Activated naive CD4-positive, alpha-beta T cell treated with anti-CD3 and anti-CD28 coated beads for 36 hours (primary cell): ENCODE measurements at regions of chr16 and their contacts with region 1.

Region 1: GRCh38 chr16:54929090-54930004 is 1.3 kb upstream of the IRX5 start:
- DNase-seq: peak; percentile 98
- H3K4me3 Mint-ChIP-seq: peak overlapping the region; percentile 75
- H3K27ac Mint-ChIP-seq: no peak overlapping the region
- H3K4me1 Mint-ChIP-seq: peaks cover 27% of the 10 kb centered on the region
- H3K27me3 Mint-ChIP-seq: peaks cover 65% of the 10 kb centered on the region

Region 2: GRCh38 chr16:53537626-53538025 is 1391.7 kb before region 1 on chr16:
- CTCF ChIA-PET with region 1: no interaction called
- intact Hi-C with region 1: loop called (anchors 5 kb)
- DNase-seq: no peak
- H3K4me3 Mint-ChIP-seq: no peak overlapping the region
- H3K27ac Mint-ChIP-seq: no peak overlapping the region
- H3K4me1 Mint-ChIP-seq: peaks cover 19% of the 10 kb centered on the region
- H3K27me3 Mint-ChIP-seq: peaks cover 7% of the 10 kb centered on the region

Region 3: GRCh38 chr16:53703590-53704444 is 1225.5 kb before region 1 on chr16 and contains the starts of genes FTO and RPGRIP1L:
- CTCF ChIA-PET with region 1: no interaction called
- intact Hi-C with region 1: loop called (anchors 1 kb)
- DNase-seq: peak; percentile 99
- H3K4me3 Mint-ChIP-seq: peak within 1 kb of the TSS; percentile 100
- H3K27ac Mint-ChIP-seq: peak within 1 kb of the TSS; percentile 89
- H3K4me1 Mint-ChIP-seq: peaks cover 30% of the 10 kb centered on the region
- H3K27me3 Mint-ChIP-seq: no peaks in the 10 kb centered on the region
- total RNA-seq, gene FTO: 60.2 to 63.9 TPM
- total RNA-seq, gene RPGRIP1L: 4.3 to 5.2 TPM

Region 4: GRCh38 chr16:53945996-53946395 is 983.4 kb before region 1 on chr16:
- CTCF ChIA-PET with region 1: no interaction called
- intact Hi-C with region 1: loop called (anchors 10 kb)
- DNase-seq: no peak
- H3K4me3 Mint-ChIP-seq: no peak overlapping the region
- H3K27ac Mint-ChIP-seq: no peak overlapping the region
- H3K4me1 Mint-ChIP-seq: peaks cover 6% of the 10 kb centered on the region
- H3K27me3 Mint-ChIP-seq: no peaks in the 10 kb centered on the region

Region 5: GRCh38 chr16:54286090-54286993 is 643.0 kb before region 1 on chr16 and contains the start of gene IRX3:
- CTCF ChIA-PET with region 1: no interaction called
- intact Hi-C with region 1: loop called (anchors 1 kb)
- DNase-seq: peak; percentile 19
- H3K4me3 Mint-ChIP-seq: peak within 1 kb of the TSS; percentile 48
- H3K27ac Mint-ChIP-seq: no peak within 1 kb of the TSS
- H3K4me1 Mint-ChIP-seq: peaks cover 41% of the 10 kb centered on the region
- H3K27me3 Mint-ChIP-seq: peaks cover 69% of the 10 kb centered on the region
- total RNA-seq, gene IRX3: not detected

Region 6: DNA sequence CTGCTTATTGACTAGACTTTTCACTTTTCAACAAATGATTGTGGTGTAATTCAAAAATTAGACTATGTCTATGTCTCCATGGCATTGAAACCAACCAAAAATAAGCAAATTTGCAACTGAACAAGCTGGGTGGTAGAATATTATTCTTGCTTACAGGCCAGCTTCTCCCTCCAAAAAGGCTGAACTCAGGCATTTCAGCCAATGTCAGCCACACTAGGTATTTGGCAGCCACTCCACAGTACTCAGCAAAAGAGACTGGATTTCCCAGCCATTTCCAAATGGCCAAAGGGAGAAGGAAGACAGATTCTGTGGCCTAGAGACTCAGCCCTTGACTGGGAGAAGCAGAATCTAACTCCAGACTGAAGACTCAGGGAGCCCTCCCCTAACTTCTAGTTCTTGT is 120.5 kb before region 1 on chr16:
- CTCF ChIA-PET with region 1: no interaction called
- intact Hi-C with region 1: no loop called
- DNase-seq: no peak
- H3K4me3 Mint-ChIP-seq: no peak overlapping the region
- H3K27ac Mint-ChIP-seq: no peak overlapping the region
- H3K4me1 Mint-ChIP-seq: no peaks in the 10 kb centered on the region
- H3K27me3 Mint-ChIP-seq: no peaks in the 10 kb centered on the region

Region 7: DNA sequence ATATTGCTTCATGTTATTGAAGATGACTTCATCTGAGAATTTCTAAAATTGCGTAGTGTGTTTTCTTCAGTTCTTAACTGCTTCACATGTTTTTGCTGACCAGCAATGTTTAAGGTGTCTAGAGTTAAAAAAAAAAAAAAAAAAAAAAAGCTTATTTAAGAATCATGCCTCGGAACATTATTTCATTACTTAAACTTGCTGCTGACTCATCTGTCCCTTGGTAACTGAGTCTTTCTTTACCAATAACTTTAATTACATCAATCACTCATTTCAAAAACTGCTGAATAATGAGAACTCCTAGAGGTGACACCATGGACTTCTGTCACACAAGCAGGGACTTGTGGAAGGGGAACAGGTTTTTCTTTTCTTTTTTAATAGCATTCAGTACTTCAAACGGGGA is 17.6 kb after region 1 on chr16:
- CTCF ChIA-PET with region 1: no interaction called
- intact Hi-C with region 1: no loop called
- DNase-seq: no peak
- H3K4me3 Mint-ChIP-seq: no peak overlapping the region
- H3K27ac Mint-ChIP-seq: no peak overlapping the region
- H3K4me1 Mint-ChIP-seq: no peaks in the 10 kb centered on the region
- H3K27me3 Mint-ChIP-seq: peaks cover 43% of the 10 kb centered on the region

Region 8: DNA sequence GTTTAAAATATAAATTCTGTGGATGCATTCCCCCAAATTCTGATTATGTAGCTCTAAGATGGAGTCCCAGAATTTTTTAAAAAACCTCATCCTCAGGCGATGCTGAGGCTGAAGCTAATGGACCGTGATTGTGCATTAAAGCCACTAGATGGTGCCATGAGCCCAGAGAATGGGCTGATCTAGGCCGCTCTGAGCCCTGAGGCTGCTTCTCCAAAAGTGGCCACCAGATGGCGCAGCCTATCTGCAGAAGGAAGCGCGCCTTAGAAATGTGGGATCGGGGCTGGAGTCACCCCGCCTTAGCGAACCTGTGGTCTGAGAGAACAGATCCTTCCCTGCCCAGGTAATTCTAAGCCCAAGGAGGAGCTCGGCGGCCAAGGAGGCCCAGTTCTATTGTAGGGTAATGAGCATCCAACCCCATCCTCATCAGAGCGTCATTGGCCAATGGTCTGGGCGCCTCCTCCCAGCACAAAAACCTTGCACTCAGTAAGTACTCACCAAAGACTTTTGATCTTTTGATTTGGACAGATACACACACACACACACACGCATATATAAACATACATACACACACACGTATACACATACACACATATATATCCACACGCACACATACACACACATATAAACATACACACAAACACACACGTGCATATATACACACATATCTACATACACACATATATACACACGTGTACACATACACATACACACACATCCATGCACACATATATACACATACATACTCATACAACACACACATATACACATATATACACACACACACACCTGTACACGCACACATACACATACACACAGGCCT is 535.9 kb after region 1 on chr16:
- CTCF ChIA-PET with region 1: no interaction called
- intact Hi-C with region 1: loop called (anchors 10 kb)
- DNase-seq: peak; percentile 89
- H3K4me3 Mint-ChIP-seq: no peak overlapping the region
- H3K27ac Mint-ChIP-seq: no peak overlapping the region
- H3K4me1 Mint-ChIP-seq: no peaks in the 10 kb centered on the region
- H3K27me3 Mint-ChIP-seq: peaks cover 3% of the 10 kb centered on the region